ENCODE measurements at regions of chr9 and their contacts with region 1.

Region 1: DNA sequence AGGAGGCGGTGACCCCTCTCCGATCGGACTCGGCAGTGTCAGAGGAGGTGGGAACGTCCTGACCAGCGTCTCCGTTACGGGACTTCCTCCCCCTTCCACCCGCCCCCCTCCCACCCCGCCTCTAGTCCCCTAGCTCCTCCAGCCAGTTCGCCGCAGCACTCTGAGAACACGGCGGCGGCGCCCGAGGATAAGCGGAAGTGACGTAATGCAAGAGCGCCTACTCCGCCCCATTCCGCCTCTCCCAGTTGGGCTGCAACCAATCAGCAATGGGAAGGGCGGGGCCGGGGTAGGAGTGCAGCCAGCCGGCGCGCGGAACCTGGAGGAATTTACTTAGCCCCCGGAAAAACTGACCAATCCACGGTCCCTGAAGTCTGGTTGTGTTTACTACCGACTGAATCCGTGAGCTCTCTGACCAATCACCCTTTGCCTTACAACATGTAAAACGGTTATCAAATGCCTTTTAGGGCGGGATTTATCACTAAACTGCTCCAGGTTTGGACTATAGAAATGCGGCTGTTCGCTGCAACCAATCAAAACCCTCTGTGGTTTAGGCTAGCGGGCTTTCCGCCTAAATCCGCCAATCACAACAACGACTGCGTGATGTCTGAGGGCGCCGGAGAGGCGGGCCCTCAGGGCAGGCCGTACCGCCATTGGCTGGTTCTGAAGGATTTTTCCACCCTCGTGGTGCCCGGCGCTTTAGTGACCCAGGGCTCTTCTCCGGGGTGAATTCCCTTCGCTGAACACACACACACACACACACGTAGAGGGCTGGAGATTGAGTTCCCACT is at the start of gene ZBTB5:
- DNase-seq: peak; percentile 98
- H3K4me3 Mint-ChIP-seq: peak within 1 kb of the TSS; percentile 97
- H3K27ac Mint-ChIP-seq: peak within 1 kb of the TSS; percentile 95
- H3K4me1 Mint-ChIP-seq: peaks cover 47% of the 10 kb centered on the region
- H3K27me3 Mint-ChIP-seq: no peaks in the 10 kb centered on the region
- total RNA-seq, gene ZBTB5: 9.6 and 11.2 TPM in 2 replicates

Region 2: DNA sequence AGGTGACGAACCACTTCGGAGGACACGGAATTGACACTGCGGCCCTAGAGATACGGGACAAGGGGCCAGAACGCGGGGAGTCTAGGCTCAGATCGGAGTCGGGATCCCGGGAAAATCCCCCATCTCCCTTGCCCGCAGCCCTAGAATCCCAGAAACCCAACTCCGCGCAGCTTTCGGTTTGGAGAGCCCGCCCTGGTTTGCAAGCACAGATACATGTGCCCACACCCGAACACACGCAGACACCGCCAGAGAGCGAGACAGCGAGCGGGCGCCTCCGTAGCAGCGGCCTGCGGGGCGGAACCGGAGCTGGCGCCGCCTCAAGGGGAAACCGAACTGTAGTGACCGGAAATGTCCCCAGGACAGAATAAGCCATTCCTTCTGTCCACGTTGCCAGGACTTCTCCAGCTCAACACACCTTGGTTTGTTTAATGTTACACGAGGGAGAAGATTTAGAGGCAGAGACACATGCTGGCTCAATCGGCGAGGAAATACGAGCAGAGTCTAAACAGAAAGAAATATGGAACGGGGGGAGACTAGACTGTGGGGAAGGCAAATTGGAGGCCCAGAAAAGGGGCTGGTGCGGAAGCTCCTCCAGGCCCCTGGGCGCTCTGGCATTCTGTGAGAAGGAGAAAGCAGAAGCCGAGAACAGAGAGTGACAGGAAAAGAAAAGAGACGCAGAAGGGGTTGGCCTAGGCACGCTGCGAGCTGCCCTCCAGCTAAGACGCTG is 428.5 kb before region 1 on chr9:
- intact Hi-C with region 1: loop called (anchors 5 kb)
- DNase-seq: peak; percentile 30
- H3K4me3 Mint-ChIP-seq: peak overlapping the region; percentile 72
- H3K27ac Mint-ChIP-seq: peak overlapping the region; percentile 46
- H3K4me1 Mint-ChIP-seq: peaks cover 25% of the 10 kb centered on the region
- H3K27me3 Mint-ChIP-seq: peaks cover 82% of the 10 kb centered on the region

Region 3: DNA sequence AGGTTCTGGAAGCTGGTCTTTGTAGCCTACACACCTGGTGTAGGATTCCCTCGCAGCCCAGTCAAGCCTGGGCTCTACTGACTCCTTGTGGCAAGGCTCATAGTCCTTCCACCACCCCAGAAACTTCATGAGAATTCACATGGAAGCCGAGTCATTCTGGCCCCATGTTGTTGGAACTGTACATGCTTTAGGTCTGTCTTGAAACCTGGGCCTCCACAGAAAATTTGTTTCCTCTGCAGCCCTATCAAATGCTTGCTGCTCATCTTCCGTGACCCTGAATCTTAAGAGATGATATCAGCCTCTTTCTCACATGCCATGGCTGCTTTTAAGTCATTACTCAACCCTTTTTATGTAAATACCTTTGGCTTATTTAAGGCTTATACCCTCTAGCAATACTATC is 156.3 kb before region 1 on chr9:
- intact Hi-C with region 1: loop called (anchors 10 kb)
- DNase-seq: no peak
- H3K4me3 Mint-ChIP-seq: no peak overlapping the region
- H3K27ac Mint-ChIP-seq: no peak overlapping the region
- H3K4me1 Mint-ChIP-seq: peaks cover 5% of the 10 kb centered on the region
- H3K27me3 Mint-ChIP-seq: no peaks in the 10 kb centered on the region

Region 4: GRCh38 chr9:37485389-37486219 is 20.2 kb after region 1 on chr9 and contains the start of gene POLR1E:
- intact Hi-C with region 1: loop called (anchors 1 kb)
- DNase-seq: peak; percentile 95
- H3K4me3 Mint-ChIP-seq: peak within 1 kb of the TSS; percentile 96
- H3K27ac Mint-ChIP-seq: peak within 1 kb of the TSS; percentile 92
- H3K4me1 Mint-ChIP-seq: peaks cover 31% of the 10 kb centered on the region
- H3K27me3 Mint-ChIP-seq: peaks cover 8% of the 10 kb centered on the region
- total RNA-seq, gene POLR1E: 59.8 and 61.0 TPM in 2 replicates

Region 5: GRCh38 chr9:37528652-37529510 is 63.4 kb after region 1 on chr9:
- intact Hi-C with region 1: no loop called
- DNase-seq: peak; percentile 9
- H3K4me3 Mint-ChIP-seq: no peak overlapping the region
- H3K27ac Mint-ChIP-seq: peak overlapping the region; percentile 67
- H3K4me1 Mint-ChIP-seq: peaks cover 5% of the 10 kb centered on the region
- H3K27me3 Mint-ChIP-seq: no peaks in the 10 kb centered on the region

Region 6: GRCh38 chr9:37753489-37754190 is 288.2 kb after region 1 on chr9 and contains the start of gene TRMT10B:
- intact Hi-C with region 1: loop called (anchors 5 kb)
- DNase-seq: peak; percentile 65
- H3K4me3 Mint-ChIP-seq: peak within 1 kb of the TSS; percentile 95
- H3K27ac Mint-ChIP-seq: peak within 1 kb of the TSS; percentile 82
- H3K4me1 Mint-ChIP-seq: peaks cover 27% of the 10 kb centered on the region
- H3K27me3 Mint-ChIP-seq: no peaks in the 10 kb centered on the region
- total RNA-seq, gene TRMT10B: 10.0 and 11.8 TPM in 2 replicates